ENCODE measurements at regions of chr2 and their contacts with region 1.

Region 1: DNA sequence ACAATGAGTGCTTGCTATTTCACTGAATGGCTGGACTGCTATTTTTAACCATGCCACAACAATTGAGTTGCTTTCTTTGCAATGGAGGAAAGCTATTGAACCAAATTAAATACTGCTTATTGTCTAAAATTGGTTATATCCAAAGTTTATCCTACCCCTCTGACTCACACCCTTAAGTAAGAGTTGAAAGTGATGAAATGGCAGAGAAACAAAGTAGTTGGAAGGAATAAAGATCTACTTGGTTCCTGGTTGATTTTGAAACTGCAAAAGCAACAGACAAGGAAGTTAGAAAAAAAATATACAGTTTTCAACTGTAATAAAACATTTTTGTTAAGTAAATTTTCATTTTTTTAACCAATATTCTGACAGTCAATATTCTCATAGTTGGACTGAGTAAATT is 47.6 kb downstream of the EML4 start:
- DNase-seq: no peak
- ATAC-seq: no peak
- H3K4me3 Mint-ChIP-seq: no peak overlapping the region
- H3K27ac Mint-ChIP-seq: no peak overlapping the region
- H3K4me1 Mint-ChIP-seq: peaks cover 58% of the 10 kb centered on the region
- H3K27me3 Mint-ChIP-seq: no peaks in the 10 kb centered on the region
- CTCF ChIP-seq: no peak

Region 2: GRCh38 chr2:42229949-42230348 is 13.2 kb after region 1 on chr2:
- CTCF ChIA-PET with region 1: no interaction called
- POLR2A ChIA-PET with region 1: interaction called, 11 read pairs
- intact Hi-C with region 1: no loop called
- DNase-seq: no peak
- ATAC-seq: no peak
- H3K4me3 Mint-ChIP-seq: no peak overlapping the region
- H3K27ac Mint-ChIP-seq: no peak overlapping the region
- H3K4me1 Mint-ChIP-seq: peaks cover 46% of the 10 kb centered on the region
- H3K27me3 Mint-ChIP-seq: no peaks in the 10 kb centered on the region
- CTCF ChIP-seq: no peak

Region 3: DNA sequence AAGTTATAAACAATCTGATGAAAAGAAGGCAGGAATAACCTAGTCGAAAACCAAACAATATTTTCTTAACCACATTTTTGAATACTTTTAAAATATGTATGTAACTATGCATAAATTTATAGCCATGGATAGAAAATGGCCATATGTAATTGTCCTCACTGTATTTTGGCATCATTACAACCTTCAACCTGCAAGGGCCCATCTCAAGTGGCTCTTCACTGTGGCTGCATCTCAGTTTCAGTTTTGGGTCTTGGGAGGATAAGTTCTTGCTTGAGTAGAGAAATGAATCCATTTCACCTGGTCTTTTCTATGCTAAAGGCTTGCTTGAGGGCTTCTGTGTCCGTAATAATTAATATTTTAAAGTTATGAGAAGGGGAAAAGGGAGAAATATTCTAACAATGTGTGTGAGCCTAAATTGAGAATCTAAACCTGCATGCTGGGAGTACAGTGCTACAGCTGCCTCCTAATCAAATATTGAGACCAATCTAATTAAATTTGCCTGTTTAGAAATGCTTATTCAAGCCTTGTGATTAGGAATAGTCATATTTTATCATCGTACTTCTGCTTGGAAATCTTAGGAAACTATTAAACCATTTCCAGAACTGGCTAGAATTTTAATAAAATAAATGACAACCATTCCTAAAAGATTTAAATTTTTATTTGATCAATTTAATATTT is 44.9 kb after region 1 on chr2:
- CTCF ChIA-PET with region 1: no interaction called
- POLR2A ChIA-PET with region 1: no interaction called
- intact Hi-C with region 1: no loop called
- DNase-seq: no peak
- ATAC-seq: no peak
- H3K4me3 Mint-ChIP-seq: no peak overlapping the region
- H3K27ac Mint-ChIP-seq: no peak overlapping the region
- H3K4me1 Mint-ChIP-seq: peaks cover 6% of the 10 kb centered on the region
- H3K27me3 Mint-ChIP-seq: no peaks in the 10 kb centered on the region
- CTCF ChIP-seq: no peak

Region 4: DNA sequence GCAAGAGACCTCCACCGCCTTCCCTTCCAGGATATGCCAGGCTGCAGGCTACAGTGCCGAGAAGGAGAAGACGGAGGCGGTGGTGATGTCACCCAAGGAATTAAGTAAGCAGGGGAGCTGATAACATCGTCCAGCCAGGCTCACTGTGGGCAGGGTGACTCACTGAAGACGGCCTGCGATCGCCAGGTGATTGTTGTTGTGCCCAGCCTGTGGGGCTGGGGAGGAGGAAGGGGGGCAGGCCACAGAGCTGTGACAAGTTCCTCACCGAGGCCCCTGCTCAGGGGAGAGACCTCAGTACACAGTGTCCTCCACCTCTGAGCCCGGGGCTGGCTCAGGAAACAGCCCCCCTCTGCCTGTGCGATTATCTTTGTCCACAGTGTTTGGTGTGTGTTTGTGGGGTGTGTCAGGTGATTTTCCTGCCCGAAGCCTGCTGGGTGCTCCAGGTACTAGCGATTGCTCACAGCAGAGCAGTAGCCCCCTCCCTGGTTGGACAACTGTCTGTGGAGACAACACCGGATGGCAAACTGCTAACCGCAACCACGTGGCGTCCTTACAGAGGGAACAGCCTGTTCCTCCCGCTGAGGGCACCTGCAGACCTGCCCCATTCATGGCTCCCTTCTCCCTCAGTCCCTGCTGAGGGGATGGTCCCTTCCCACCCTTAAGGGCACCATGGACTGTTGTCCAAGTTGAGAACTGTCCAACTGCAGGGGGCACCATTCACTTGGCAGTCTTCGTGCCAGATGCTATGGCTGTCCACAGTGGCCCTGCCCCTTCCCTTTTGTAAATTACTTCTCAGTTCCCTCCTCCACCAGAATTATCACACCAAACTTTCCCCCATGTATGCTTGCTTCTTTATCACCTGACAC is 914.5 kb after region 1 on chr2:
- CTCF ChIA-PET with region 1: no interaction called
- POLR2A ChIA-PET with region 1: no interaction called
- intact Hi-C with region 1: no loop called
- DNase-seq: peak; percentile 62
- ATAC-seq: peak; percentile 61
- H3K4me3 Mint-ChIP-seq: peak overlapping the region; percentile 8
- H3K27ac Mint-ChIP-seq: peak overlapping the region; percentile 92
- H3K4me1 Mint-ChIP-seq: peaks cover 93% of the 10 kb centered on the region
- H3K27me3 Mint-ChIP-seq: no peaks in the 10 kb centered on the region
- CTCF ChIP-seq: no peak